H1 (cell line): ENCODE measurements at regions of chr1 and their contacts with region 1.

Region 1: GRCh38 chr1:61049850-61050540 is 32.4 kb upstream of the NFIA start:
- DNase-seq: peak; percentile 82 to 99
- H3K4me3 ChIP-seq: peak overlapping the region; percentile 34 to 85 (median 58)
- H3K27ac ChIP-seq: no peak overlapping the region
- H3K4me1 ChIP-seq: peaks cover 0 to 22% (median 10%) of the 10 kb centered on the region in 4 experiments; a peak in 4 of 7 replicates
- H3K27me3 ChIP-seq: peaks cover 33 to 41% (median 41%) of the 10 kb centered on the region in 4 experiments
- CTCF ChIP-seq: peak; percentile 86 to 97 (median 92)
- EP300 ChIP-seq: peak in 1 of 2 experiments; percentile 64; a peak in 1 of 3 replicates
- POLR2A ChIP-seq: no peak
- RAD21 ChIP-seq: peak; percentile 85 to 86

Region 2: GRCh38 chr1:60848583-60849188 is 201.3 kb before region 1 on chr1:
- CTCF ChIA-PET with region 1: interaction called, 42 read pairs
- POLR2A ChIA-PET with region 1: no interaction called
- DNase-seq: peak; percentile 1 to 59
- H3K4me3 ChIP-seq: peak overlapping the region in 1 of 4 experiments; percentile 28; a peak in 1 of 8 replicates
- H3K27ac ChIP-seq: no peak overlapping the region
- H3K4me1 ChIP-seq: peaks cover 0 to 5% (median 2%) of the 10 kb centered on the region in 4 experiments; a peak in 5 of 7 replicates
- H3K27me3 ChIP-seq: no peaks in the 10 kb centered on the region
- CTCF ChIP-seq: peak in 2 of 3 experiments; percentile 49 to 53; a peak in 2 of 4 replicates
- EP300 ChIP-seq: no peak
- POLR2A ChIP-seq: no peak
- RAD21 ChIP-seq: peak; percentile 74 to 82

Region 3: GRCh38 chr1:60978421-60979357 is 71.3 kb before region 1 on chr1:
- CTCF ChIA-PET with region 1: interaction called, 29 read pairs
- POLR2A ChIA-PET with region 1: interaction called, 3 read pairs
- DNase-seq: peak in 1 of 2 experiments; percentile 55
- H3K4me3 ChIP-seq: no peak overlapping the region
- H3K27ac ChIP-seq: no peak overlapping the region
- H3K4me1 ChIP-seq: peaks cover 0 to 4% (median 2%) of the 10 kb centered on the region in 4 experiments; a peak in 1 of 7 replicates
- H3K27me3 ChIP-seq: no peaks in the 10 kb centered on the region
- CTCF ChIP-seq: peak; percentile 64 to 75 (median 69)
- EP300 ChIP-seq: no peak
- POLR2A ChIP-seq: no peak
- RAD21 ChIP-seq: peak; percentile 71 to 74

Region 4: DNA sequence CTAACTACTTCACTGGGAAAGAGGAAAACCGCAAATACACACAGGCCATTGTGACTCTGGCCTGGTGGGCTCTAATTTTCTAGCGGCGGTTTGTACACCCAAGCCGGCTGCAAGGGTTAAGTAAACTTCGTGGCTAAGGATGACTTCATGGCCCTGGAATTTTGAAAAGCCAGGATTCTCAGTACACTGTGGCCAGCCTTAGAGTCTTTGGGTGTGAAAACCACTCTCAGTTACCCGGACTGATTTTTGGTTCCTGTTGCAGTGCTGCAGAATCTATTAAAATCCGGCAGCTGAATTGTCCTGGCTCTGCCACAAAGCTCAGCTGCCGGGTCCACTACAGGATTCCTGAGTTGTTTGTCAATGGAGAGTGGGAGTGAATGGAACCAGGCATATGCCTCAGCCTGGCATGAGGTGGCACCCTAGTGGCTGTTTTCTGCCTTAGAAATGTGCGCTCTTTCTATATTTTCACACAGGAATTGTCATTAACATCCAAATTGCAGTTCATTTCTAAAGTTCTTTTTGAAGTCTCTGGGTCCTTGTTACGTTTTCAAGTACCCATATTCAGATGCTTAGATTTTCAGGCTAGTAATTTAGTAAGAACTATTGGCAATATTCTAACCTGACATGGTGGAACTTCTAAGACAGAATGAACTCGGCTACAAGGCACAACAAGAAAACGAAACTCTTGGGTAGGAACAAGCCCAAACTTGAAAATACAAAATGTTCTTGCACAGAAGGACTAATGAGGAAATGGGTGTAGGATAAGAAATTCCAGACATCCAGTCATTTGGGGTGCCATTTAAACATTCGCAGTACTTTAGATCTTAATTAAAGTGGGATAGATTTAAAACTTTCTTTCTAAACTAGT is 288.2 kb after region 1 on chr1:
- CTCF ChIA-PET with region 1: interaction called, 10 read pairs
- POLR2A ChIA-PET with region 1: no interaction called
- DNase-seq: peak in 1 of 2 experiments; percentile 19
- H3K4me3 ChIP-seq: no peak overlapping the region
- H3K27ac ChIP-seq: no peak overlapping the region
- H3K4me1 ChIP-seq: peaks cover 0 to 16% (median 9%) of the 10 kb centered on the region in 4 experiments; a peak in 5 of 7 replicates
- H3K27me3 ChIP-seq: no peaks in the 10 kb centered on the region
- CTCF ChIP-seq: peak; percentile 40 to 71 (median 62)
- EP300 ChIP-seq: no peak
- POLR2A ChIP-seq: no peak
- RAD21 ChIP-seq: peak; percentile 80 to 85